ENCODE measurements at regions of chr1 and their contacts with region 1.

Region 1: GRCh38 chr1:203038891-203039608 is 12.8 kb downstream of the PPFIA4 start:
- DNase-seq: peak; percentile 65
- ATAC-seq: peak; percentile 79
- H3K4me3 ChIP-seq: no peak overlapping the region
- H3K27ac ChIP-seq: no peak overlapping the region
- H3K4me1 ChIP-seq: peaks cover 25% of the 10 kb centered on the region
- H3K27me3 ChIP-seq: no peaks in the 10 kb centered on the region
- CTCF ChIP-seq: peak; percentile 90
- POLR2A ChIP-seq: no peak
- RAD21 ChIP-seq: peak; percentile 90

Region 2: GRCh38 chr1:203117611-203118575 is 78.8 kb after region 1 on chr1:
- CTCF ChIA-PET with region 1: interaction called, 6 read pairs
- POLR2A ChIA-PET with region 1: no interaction called
- dilution Hi-C with region 1: no loop called
- in situ Hi-C with region 1: no loop called
- intact Hi-C with region 1: loop called (anchors 5 kb)
- DNase-seq: peak; percentile 50
- ATAC-seq: peak; percentile 99
- H3K4me3 ChIP-seq: no peak overlapping the region
- H3K27ac ChIP-seq: no peak overlapping the region
- H3K4me1 ChIP-seq: no peaks in the 10 kb centered on the region
- H3K27me3 ChIP-seq: peaks cover 70% of the 10 kb centered on the region
- CTCF ChIP-seq: peak; percentile 86
- POLR2A ChIP-seq: no peak
- RAD21 ChIP-seq: peak; percentile 86

Region 3: DNA sequence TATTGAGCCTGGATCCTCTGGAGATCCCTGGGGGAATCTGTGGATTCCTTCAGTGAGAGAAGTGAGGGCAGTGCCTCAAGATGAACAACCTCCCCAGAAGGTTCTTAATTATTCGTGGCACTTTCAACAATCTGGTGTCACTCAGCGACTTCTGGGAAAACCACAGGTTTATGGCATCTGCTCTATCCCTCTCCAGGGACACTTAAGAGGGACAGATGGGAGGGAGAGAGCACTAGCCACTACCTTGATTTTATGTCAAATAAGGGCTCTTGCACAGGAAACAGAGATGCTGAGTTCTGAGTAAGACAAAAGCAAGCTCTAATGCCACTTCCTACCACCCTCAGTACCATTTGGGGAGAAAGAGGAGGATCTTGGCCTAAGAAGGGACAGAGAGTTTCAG is 168.7 kb after region 1 on chr1:
- CTCF ChIA-PET with region 1: interaction called, 14 read pairs
- POLR2A ChIA-PET with region 1: no interaction called
- dilution Hi-C with region 1: no loop called
- in situ Hi-C with region 1: no loop called
- intact Hi-C with region 1: no loop called
- DNase-seq: no peak
- ATAC-seq: no peak
- H3K4me3 ChIP-seq: no peak overlapping the region
- H3K27ac ChIP-seq: no peak overlapping the region
- H3K4me1 ChIP-seq: peaks cover 3% of the 10 kb centered on the region
- H3K27me3 ChIP-seq: peaks cover 4% of the 10 kb centered on the region; the same call in 1 of the 2 replicates
- CTCF ChIP-seq: no peak
- POLR2A ChIP-seq: no peak
- RAD21 ChIP-seq: no peak

Region 4: DNA sequence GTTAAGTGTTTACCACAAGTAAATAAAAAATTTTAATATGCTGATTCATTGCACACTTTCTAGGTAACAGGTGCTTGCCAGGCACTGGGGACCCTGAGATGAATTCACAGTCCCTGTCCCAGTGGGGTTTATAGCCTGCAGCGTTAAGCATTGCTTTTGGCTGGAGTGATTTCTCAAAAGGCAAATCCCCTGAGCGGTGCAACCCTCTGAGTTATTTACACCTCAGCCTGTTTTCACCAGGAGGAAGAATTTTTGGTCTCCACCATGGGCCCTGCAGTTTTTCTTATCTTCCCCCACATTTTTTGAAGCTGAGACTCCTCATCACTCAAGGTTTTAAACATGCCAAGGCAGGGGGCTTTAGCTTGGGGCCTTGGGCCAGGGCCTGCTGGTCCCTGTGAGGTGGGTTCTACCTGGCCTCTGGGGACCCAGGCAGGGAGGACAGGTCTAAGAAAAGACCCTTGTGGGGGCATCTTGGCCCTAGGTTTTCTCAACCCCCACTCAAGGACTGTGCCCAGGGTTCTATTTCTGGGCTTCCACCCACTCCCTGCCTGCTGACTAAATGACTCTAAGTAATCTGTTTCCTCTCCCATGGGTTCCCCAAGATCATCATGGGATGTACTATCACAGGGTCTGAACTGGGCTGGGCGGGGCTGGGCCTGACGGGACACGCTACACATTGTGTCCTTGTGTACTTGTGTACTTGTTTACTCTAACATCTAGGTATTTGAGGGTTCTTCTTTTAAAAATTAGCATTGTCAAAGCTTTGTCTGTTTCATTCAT is 200.7 kb after region 1 on chr1:
- CTCF ChIA-PET with region 1: no interaction called
- POLR2A ChIA-PET with region 1: no interaction called
- dilution Hi-C with region 1: no loop called
- in situ Hi-C with region 1: no loop called
- intact Hi-C with region 1: no loop called
- DNase-seq: no peak
- ATAC-seq: no peak
- H3K4me3 ChIP-seq: no peak overlapping the region
- H3K27ac ChIP-seq: no peak overlapping the region
- H3K4me1 ChIP-seq: no peaks in the 10 kb centered on the region
- H3K27me3 ChIP-seq: peaks cover 24% of the 10 kb centered on the region
- CTCF ChIP-seq: no peak
- POLR2A ChIP-seq: no peak
- RAD21 ChIP-seq: no peak

Region 5: DNA sequence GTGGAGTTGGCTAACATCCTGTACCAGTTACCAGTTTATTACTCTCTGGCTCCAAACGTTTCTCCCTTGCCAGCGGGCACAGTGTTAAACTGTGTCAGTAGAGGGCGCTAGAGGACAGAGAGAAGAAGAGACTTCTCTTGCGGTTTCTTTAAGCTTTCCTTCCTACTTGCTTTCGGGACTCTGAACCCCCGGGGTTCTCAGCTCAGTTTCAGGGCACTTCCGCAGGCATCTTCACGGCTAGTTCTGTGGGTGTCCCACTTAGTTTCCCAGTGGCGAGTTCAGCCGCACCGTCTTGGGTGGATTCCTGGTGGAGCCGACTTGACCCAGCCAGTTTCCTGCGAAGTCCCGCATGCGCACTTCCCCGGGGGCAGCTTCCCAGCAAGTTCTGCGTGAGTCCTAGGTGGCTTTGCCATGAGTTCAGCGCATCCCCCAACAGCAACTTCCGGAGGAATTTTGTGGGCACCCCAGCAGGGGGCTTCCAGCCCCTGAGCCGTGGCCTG is 228.3 kb after region 1 on chr1:
- CTCF ChIA-PET with region 1: interaction called, 21 read pairs
- POLR2A ChIA-PET with region 1: no interaction called
- dilution Hi-C with region 1: no loop called
- in situ Hi-C with region 1: no loop called
- intact Hi-C with region 1: loop called (anchors 1 kb)
- DNase-seq: peak; percentile 78
- ATAC-seq: peak; percentile 85
- H3K4me3 ChIP-seq: peak overlapping the region; percentile 59
- H3K27ac ChIP-seq: peak overlapping the region; percentile 71
- H3K4me1 ChIP-seq: no peaks in the 10 kb centered on the region
- H3K27me3 ChIP-seq: peaks cover 13% of the 10 kb centered on the region
- CTCF ChIP-seq: peak; percentile 88
- POLR2A ChIP-seq: no peak
- RAD21 ChIP-seq: peak; percentile 73

Region 6: DNA sequence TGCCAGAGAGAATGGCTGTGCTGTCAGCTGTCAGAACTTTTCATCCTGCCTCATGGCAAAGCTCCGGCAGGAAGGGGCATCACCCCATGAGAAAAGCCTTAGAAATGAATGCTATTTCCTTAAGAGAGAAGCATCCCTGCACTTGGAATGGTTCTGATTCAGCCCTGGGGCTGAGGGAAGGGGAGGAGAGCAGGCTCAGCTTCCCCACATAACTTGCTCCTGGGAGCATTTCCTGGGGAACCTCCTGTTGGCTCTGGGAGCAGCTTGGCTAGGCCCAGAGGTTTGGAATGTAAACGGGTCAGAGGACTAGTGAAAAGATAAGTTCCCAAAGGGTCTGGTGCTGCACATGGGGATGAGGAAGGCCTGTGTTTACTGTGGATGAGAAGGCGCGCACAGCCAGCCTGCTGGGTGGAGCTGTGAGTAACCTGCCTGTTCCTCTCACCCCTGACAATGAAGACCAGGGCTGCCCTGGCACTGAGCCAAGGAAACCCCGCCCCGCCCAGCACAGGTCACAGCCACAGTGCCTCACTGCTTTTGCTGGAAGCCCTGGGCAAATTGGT is 441.6 kb after region 1 on chr1:
- CTCF ChIA-PET with region 1: no interaction called
- POLR2A ChIA-PET with region 1: no interaction called
- dilution Hi-C with region 1: no loop called
- in situ Hi-C with region 1: no loop called
- intact Hi-C with region 1: loop called (anchors 10 kb)
- DNase-seq: peak; percentile 97
- ATAC-seq: peak; percentile 92
- H3K4me3 ChIP-seq: no peak overlapping the region
- H3K27ac ChIP-seq: peak overlapping the region; percentile 82
- H3K4me1 ChIP-seq: peaks cover 21% of the 10 kb centered on the region
- H3K27me3 ChIP-seq: peaks cover 5% of the 10 kb centered on the region; the same call in 1 of the 2 replicates
- CTCF ChIP-seq: no peak
- POLR2A ChIP-seq: no peak
- RAD21 ChIP-seq: no peak